Activated CD4-positive, alpha-beta T cell treated with anti-CD3 and anti-CD28 coated beads, Interleukin-2, amount 10 ng/mL, durations not matched to agents 7 days and 5 days (primary cell): ENCODE measurements at regions of chr11 and their contacts with region 1.

Region 1: GRCh38 chr11:14764579-14765527 is 121.2 kb downstream of the PDE3B start:
- DNase-seq: peak; percentile 76
- H3K4me3 Mint-ChIP-seq: no peak overlapping the region
- H3K27ac Mint-ChIP-seq: no peak overlapping the region
- H3K4me1 Mint-ChIP-seq: peaks cover 46% of the 10 kb centered on the region
- H3K27me3 Mint-ChIP-seq: no peaks in the 10 kb centered on the region

Region 2: GRCh38 chr11:14643697-14644225 is 121.1 kb before region 1 on chr11 and contains the start of gene PDE3B:
- CTCF ChIA-PET with region 1: interaction called, 10 read pairs
- POLR2A ChIA-PET with region 1: interaction called, 5 read pairs
- DNase-seq: peak; percentile 82
- H3K4me3 Mint-ChIP-seq: peak within 1 kb of the TSS; percentile 82
- H3K27ac Mint-ChIP-seq: peak within 1 kb of the TSS; percentile 87
- H3K4me1 Mint-ChIP-seq: peaks cover 44% of the 10 kb centered on the region
- H3K27me3 Mint-ChIP-seq: no peaks in the 10 kb centered on the region
- total RNA-seq, gene PDE3B: 96.6 to 101 TPM

Region 3: GRCh38 chr11:14742849-14743559 is 21.8 kb before region 1 on chr11:
- CTCF ChIA-PET with region 1: no interaction called
- POLR2A ChIA-PET with region 1: no interaction called
- DNase-seq: no peak
- H3K4me3 Mint-ChIP-seq: no peak overlapping the region
- H3K27ac Mint-ChIP-seq: no peak overlapping the region
- H3K4me1 Mint-ChIP-seq: peaks cover 63% of the 10 kb centered on the region
- H3K27me3 Mint-ChIP-seq: no peaks in the 10 kb centered on the region